ENCODE measurements at regions of chr1 and their contacts with region 1.

Region 1: GRCh38 chr1:26666855-26667254 is 29.0 kb upstream of the ARID1A start:
- DNase-seq: no peak
- H3K4me3 ChIP-seq: no peak overlapping the region
- H3K4me3 Mint-ChIP-seq: no peak overlapping the region
- H3K27ac Mint-ChIP-seq: no peak overlapping the region
- H3K4me1 ChIP-seq: no peaks in the 10 kb centered on the region
- H3K4me1 Mint-ChIP-seq: no peaks in the 10 kb centered on the region
- H3K27me3 ChIP-seq: no peaks in the 10 kb centered on the region
- H3K27me3 Mint-ChIP-seq: no peaks in the 10 kb centered on the region
- CTCF ChIP-seq: no peak

Region 2: DNA sequence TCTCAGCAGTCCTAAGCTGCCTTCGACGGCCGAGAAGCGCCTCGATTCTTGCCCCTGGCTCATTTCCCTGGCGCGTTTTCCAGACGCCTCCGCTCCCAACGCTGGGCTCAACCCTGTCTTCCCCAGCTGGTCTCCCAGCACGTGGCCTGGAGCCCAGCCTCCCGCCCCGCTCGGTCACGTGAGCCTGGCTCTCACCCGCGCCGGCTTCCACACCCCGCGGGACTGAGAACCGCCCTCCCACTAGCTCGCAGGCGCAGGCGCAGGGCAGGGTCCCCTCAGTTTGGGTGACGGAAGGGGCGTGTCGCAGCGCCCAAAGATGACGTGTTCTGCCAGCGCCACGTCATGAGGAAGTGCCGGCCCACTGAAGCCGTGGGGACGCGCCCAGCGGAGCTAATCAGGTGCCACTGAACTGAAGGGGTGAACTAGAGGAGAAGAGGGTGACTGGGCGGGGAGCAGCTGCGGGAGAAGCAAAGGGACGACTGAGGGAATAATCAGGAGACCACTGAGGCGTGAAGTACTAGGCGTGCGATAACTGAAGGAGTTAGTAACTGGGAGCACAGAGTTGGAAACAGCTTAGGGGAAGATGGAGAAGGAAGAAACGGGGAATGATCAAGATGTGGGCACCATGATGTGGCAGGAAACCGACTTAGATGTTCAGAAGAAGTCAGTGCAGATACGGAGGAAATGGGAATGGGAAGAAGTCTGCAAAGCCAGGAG is 234.7 kb before region 1 on chr1 and contains the start of gene DHDDS:
- CTCF ChIA-PET with region 1: no interaction called
- POLR2A ChIA-PET with region 1: no interaction called
- intact Hi-C with region 1: no loop called
- DNase-seq: peak; percentile 97
- H3K4me3 ChIP-seq: peak within 1 kb of the TSS; percentile 78
- H3K4me3 Mint-ChIP-seq: peak within 1 kb of the TSS; percentile 95
- H3K27ac Mint-ChIP-seq: peak within 1 kb of the TSS; percentile 94
- H3K4me1 ChIP-seq: peaks cover 6% of the 10 kb centered on the region
- H3K4me1 Mint-ChIP-seq: no peaks in the 10 kb centered on the region
- H3K27me3 ChIP-seq: no peaks in the 10 kb centered on the region
- H3K27me3 Mint-ChIP-seq: no peaks in the 10 kb centered on the region
- CTCF ChIP-seq: no peak
- total RNA-seq, gene DHDDS: 46.9 and 55.6 TPM in 2 replicates

Region 3: DNA sequence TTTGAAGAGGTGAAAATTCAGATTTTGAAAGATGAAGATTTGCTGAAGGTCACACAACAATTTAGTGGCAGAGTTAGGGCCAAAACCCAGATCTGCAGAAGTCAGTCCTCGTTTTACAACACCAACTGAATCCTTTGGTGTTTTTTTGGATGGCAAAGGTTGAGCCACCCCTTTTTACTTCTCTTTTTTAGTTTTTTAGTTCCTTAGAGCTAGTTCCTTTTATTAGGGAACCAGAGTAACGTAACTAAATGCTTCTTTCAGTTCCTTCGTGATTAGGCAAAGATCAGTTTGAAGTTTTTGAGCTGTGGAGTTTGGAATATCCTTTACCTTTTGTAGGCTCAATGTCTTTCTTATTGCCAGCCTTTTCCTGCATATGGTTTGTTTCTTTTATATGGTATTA is 38.9 kb before region 1 on chr1:
- CTCF ChIA-PET with region 1: no interaction called
- POLR2A ChIA-PET with region 1: no interaction called
- intact Hi-C with region 1: no loop called
- DNase-seq: no peak
- H3K4me3 ChIP-seq: no peak overlapping the region
- H3K4me3 Mint-ChIP-seq: no peak overlapping the region
- H3K27ac Mint-ChIP-seq: no peak overlapping the region
- H3K4me1 ChIP-seq: peaks cover 8% of the 10 kb centered on the region; the same call in 1 of the 2 replicates
- H3K4me1 Mint-ChIP-seq: peaks cover 6% of the 10 kb centered on the region
- H3K27me3 ChIP-seq: no peaks in the 10 kb centered on the region
- H3K27me3 Mint-ChIP-seq: no peaks in the 10 kb centered on the region
- CTCF ChIP-seq: no peak

Region 4: DNA sequence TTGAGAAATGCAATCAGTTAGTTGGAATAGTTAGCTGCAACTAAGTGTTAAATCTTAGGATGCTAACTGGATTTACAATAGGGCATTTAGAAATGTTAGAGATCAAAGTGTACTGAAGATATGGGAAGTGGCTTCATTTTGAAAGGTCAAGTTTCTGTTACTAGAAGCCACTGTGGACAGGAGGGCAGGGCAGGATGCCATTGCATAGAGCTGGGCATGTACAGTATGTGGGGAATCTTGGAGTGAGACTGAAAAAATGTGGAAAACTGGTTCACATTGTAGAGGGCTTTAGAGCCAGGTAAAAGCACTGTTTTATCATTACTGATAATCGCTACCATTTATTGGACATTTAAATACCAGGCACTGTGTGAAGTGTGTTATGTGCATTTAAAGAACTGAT is 59.9 kb after region 1 on chr1:
- CTCF ChIA-PET with region 1: no interaction called
- POLR2A ChIA-PET with region 1: no interaction called
- intact Hi-C with region 1: loop called (anchors 1 kb)
- DNase-seq: no peak
- H3K4me3 ChIP-seq: no peak overlapping the region
- H3K4me3 Mint-ChIP-seq: no peak overlapping the region
- H3K27ac Mint-ChIP-seq: peak overlapping the region; percentile 30
- H3K4me1 ChIP-seq: peaks cover 35% of the 10 kb centered on the region
- H3K4me1 Mint-ChIP-seq: peaks cover 16% of the 10 kb centered on the region
- H3K27me3 ChIP-seq: no peaks in the 10 kb centered on the region
- H3K27me3 Mint-ChIP-seq: no peaks in the 10 kb centered on the region
- CTCF ChIP-seq: no peak